ENCODE measurements at regions of chr7 and their contacts with region 1.

Region 1: GRCh38 chr7:26151953-26152781 is at the start of gene NFE2L3:
- DNase-seq: peak; percentile 96
- H3K4me3 Mint-ChIP-seq: peak within 1 kb of the TSS; percentile 93
- H3K27ac Mint-ChIP-seq: peak within 1 kb of the TSS; percentile 99
- H3K4me1 Mint-ChIP-seq: peaks cover 43% of the 10 kb centered on the region
- H3K27me3 Mint-ChIP-seq: peaks cover 1% of the 10 kb centered on the region
- total RNA-seq, gene NFE2L3: 67.8 and 68.7 TPM in 2 replicates

Region 2: DNA sequence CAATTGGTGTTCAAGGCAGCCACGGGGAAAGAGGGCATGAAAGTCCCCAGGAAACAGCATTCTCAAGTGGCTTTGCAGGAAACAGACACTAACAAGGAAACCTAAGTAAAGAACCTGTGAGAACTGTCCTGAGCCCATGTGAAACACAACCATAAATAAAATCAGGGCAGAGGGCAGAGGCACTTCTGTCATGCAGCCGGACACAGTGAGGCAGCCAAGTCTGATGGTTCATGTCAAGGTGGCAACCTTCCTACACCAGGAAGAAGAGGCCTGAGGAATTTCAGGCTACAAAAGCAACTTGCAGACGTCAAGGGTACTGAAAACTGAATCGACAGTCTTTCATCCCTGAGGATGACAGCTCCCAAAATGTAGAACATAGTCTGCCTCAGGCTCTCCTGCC is 465.7 kb before region 1 on chr7:
- intact Hi-C with region 1: no loop called
- DNase-seq: no peak
- H3K4me3 Mint-ChIP-seq: no peak overlapping the region
- H3K27ac Mint-ChIP-seq: no peak overlapping the region
- H3K4me1 Mint-ChIP-seq: peaks cover 3% of the 10 kb centered on the region
- H3K27me3 Mint-ChIP-seq: no peaks in the 10 kb centered on the region

Region 3: GRCh38 chr7:25862260-25863037 is 289.7 kb before region 1 on chr7:
- intact Hi-C with region 1: loop called (anchors 5 kb)
- DNase-seq: peak; percentile 99
- H3K4me3 Mint-ChIP-seq: peak overlapping the region; percentile 76
- H3K27ac Mint-ChIP-seq: peak overlapping the region; percentile 75
- H3K4me1 Mint-ChIP-seq: peaks cover 30% of the 10 kb centered on the region
- H3K27me3 Mint-ChIP-seq: peaks cover 68% of the 10 kb centered on the region

Region 4: GRCh38 chr7:26090927-26091519 is 61.1 kb before region 1 on chr7:
- intact Hi-C with region 1: loop called (anchors 1 kb)
- DNase-seq: peak; percentile 75
- H3K4me3 Mint-ChIP-seq: peak overlapping the region; percentile 26
- H3K27ac Mint-ChIP-seq: peak overlapping the region; percentile 16
- H3K4me1 Mint-ChIP-seq: peaks cover 19% of the 10 kb centered on the region
- H3K27me3 Mint-ChIP-seq: peaks cover 3% of the 10 kb centered on the region

Region 5: DNA sequence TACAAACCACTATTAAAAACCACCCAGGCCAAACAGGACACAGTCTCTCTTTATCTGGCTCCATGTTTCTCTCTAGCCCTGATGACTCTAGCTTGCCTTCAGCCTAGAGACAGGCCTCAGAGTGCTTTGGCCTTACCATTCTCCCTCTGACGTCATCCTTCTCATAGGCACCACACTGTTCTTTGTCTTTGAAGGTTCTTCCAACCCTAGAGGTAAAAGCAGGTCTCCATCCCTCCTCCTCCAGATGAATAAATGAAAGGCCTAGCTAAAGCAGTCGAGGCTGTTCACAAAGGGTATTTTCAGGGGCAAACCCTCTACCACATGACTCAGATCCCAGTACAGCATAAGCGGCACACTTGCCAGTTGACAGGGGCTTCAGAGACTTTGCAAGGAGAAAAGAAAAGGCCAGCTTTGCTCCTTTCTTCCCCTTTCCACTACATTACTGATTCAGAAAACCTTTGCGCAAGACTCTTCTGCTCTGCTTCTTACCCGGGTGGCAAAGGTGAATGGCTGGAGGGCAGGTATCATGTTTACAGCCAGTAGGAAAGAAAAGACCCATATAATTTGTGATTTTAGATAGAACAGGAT is 14.6 kb after region 1 on chr7:
- intact Hi-C with region 1: loop called (anchors 1 kb)
- DNase-seq: no peak
- H3K4me3 Mint-ChIP-seq: peak overlapping the region; percentile 15
- H3K27ac Mint-ChIP-seq: peak overlapping the region; percentile 71
- H3K4me1 Mint-ChIP-seq: peaks cover 55% of the 10 kb centered on the region
- H3K27me3 Mint-ChIP-seq: no peaks in the 10 kb centered on the region

Region 6: DNA sequence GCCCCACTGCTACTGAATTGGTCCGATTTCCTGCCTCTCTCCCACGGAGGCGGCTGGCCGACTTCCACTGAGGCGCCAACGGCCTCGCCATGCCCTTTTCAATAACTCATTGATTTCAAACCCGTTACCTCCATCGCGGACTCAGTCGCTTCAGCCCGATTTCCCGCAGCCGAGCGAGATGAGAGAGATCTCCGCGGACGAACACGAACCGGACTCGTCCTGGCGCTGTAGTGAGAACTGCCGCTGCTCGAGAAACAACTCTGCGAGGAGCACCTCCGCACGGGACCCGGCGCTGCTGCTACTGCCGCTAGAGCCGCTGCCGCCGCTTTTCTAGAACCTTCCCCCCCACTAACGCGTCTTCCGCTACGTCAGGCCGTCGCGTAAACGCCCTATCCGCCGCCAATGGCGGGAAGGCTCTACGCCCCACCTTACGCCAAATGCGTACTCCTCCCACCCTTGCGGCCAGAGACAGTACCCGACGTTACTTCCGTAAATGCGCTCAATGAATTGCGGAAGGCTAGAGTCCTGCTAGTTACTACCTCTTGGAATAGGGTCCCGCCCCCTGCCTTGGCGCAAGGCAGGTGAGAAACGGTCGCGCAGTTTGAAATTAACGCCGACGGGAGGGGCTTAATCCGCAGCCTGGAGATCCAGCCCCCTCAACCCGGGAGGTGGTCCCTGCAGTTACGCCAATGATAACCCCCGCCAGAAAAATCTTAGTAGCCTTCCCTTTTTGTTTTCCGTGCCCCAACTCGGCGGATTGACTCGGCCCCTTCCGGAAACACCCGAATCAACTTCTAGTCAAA is 48.5 kb after region 1 on chr7 and contains the start of gene HNRNPA2B1:
- intact Hi-C with region 1: loop called (anchors 1 kb)
- DNase-seq: peak; percentile 100
- H3K4me3 Mint-ChIP-seq: peak within 1 kb of the TSS; percentile 100
- H3K27ac Mint-ChIP-seq: peak within 1 kb of the TSS; percentile 99
- H3K4me1 Mint-ChIP-seq: peaks cover 51% of the 10 kb centered on the region
- H3K27me3 Mint-ChIP-seq: peaks cover 7% of the 10 kb centered on the region
- total RNA-seq, gene HNRNPA2B1: 862 and 873 TPM in 2 replicates

Region 7: GRCh38 chr7:26376175-26376917 is 224.2 kb after region 1 on chr7:
- intact Hi-C with region 1: loop called (anchors 5 kb)
- DNase-seq: peak; percentile 84
- H3K4me3 Mint-ChIP-seq: peak overlapping the region; percentile 84
- H3K27ac Mint-ChIP-seq: peak overlapping the region; percentile 88
- H3K4me1 Mint-ChIP-seq: peaks cover 5% of the 10 kb centered on the region
- H3K27me3 Mint-ChIP-seq: peaks cover 38% of the 10 kb centered on the region